ENCODE measurements at regions of chr2 and their contacts with region 1.

Region 1: GRCh38 chr2:177148477-177149154 is 64.0 kb upstream of the HNRNPA3 start:
- DNase-seq: peak; percentile 85
- H3K4me3 Mint-ChIP-seq: peak overlapping the region; percentile 82
- H3K27ac Mint-ChIP-seq: no peak overlapping the region
- H3K4me1 Mint-ChIP-seq: peaks cover 10% of the 10 kb centered on the region
- H3K27me3 Mint-ChIP-seq: peaks cover 22% of the 10 kb centered on the region

Region 2: GRCh38 chr2:176554101-176555048 is 594.2 kb before region 1 on chr2:
- CTCF ChIA-PET with region 1: no interaction called
- intact Hi-C with region 1: loop called (anchors 5 kb)
- DNase-seq: peak; percentile 45
- H3K4me3 Mint-ChIP-seq: peak overlapping the region; percentile 72
- H3K27ac Mint-ChIP-seq: no peak overlapping the region
- H3K4me1 Mint-ChIP-seq: peaks cover 12% of the 10 kb centered on the region
- H3K27me3 Mint-ChIP-seq: peaks cover 39% of the 10 kb centered on the region

Region 3: GRCh38 chr2:176653479-176654443 is 494.9 kb before region 1 on chr2:
- CTCF ChIA-PET with region 1: interaction called, 13 read pairs
- intact Hi-C with region 1: loop called (anchors 1 kb)
- DNase-seq: peak; percentile 59
- H3K4me3 Mint-ChIP-seq: no peak overlapping the region
- H3K27ac Mint-ChIP-seq: no peak overlapping the region
- H3K4me1 Mint-ChIP-seq: peaks cover 4% of the 10 kb centered on the region
- H3K27me3 Mint-ChIP-seq: peaks cover 32% of the 10 kb centered on the region

Region 4: DNA sequence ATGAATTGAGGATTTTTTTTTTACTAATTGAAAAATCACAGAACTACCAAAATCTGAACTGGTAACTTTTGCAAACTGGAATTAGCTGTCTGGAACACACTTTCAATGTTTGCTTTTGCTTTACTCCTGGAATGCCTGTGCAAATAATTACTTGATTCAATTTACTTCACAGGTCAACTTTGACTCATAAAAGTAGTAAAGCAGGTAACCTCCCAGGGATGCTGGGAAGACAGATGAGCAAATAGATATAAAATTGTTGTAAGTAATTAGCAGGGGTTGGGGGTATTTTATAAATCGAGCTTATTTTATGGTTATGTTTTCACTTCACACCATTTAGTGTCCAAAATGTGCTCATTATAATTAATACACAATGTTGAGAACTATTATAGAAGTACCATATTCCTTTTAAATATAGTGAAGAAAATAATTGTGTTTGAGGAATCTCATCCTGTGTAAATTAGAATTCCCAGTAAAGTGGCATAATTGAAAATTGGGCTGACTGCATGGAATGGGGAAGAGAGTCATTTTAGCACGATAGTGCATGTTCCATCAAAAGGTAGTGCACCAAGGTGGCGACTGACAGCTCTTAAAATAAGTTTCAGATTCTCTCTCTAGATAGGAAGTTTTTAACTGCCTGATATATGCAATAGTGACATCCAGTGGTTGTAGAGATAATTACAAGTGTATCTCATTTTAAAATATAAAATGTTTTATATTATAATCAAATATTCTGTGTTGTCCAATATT is 334.1 kb before region 1 on chr2:
- CTCF ChIA-PET with region 1: interaction called, 20 read pairs
- intact Hi-C with region 1: loop called (anchors 1 kb)
- DNase-seq: peak; percentile 19
- H3K4me3 Mint-ChIP-seq: no peak overlapping the region
- H3K27ac Mint-ChIP-seq: no peak overlapping the region
- H3K4me1 Mint-ChIP-seq: peaks cover 12% of the 10 kb centered on the region
- H3K27me3 Mint-ChIP-seq: no peaks in the 10 kb centered on the region

Region 5: DNA sequence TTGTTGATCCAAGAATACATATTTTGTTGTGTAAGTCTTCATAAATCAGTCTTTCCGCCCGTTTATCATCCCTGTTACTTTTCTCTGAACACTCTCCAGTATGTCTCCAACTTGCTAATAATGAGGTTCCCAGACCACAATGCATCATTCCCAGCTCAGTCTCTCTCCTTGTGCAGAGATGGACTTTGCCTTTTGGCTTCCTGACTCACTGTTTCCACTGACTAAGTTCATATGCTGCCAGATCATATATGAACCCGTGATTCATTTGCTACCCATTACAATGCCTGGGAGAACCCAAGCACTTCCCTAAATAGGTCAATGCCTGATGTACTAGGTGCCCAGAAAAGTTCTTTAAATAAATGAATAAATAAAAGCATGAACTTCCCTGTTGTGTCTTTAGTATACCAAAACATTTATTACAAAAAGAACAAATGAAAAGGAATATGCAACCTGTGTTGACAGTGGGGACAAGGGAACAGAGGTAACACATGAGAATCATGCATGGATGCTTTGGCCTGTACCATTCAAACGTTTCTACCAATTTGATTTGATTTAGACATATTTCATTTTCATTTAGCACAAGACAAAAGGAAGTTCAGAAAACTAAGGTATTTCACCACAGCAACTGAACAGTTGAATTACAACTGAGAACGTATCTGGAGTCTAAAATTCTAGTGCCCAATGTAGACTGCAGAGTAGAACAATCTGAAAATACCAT is 151.4 kb before region 1 on chr2:
- CTCF ChIA-PET with region 1: no interaction called
- intact Hi-C with region 1: loop called (anchors 1 kb)
- DNase-seq: peak; percentile 46
- H3K4me3 Mint-ChIP-seq: no peak overlapping the region
- H3K27ac Mint-ChIP-seq: peak overlapping the region; percentile 19
- H3K4me1 Mint-ChIP-seq: peaks cover 27% of the 10 kb centered on the region
- H3K27me3 Mint-ChIP-seq: peaks cover 2% of the 10 kb centered on the region

Measured in activated naive CD4-positive, alpha-beta T cell treated with anti-CD3 and anti-CD28 coated beads for 36 hours (primary cell).